ENCODE measurements at regions of chr1 and their contacts with region 1.

Region 1: GRCh38 chr1:65209005-65209885 is 61.2 kb downstream of the AK4 start:
- ATAC-seq: peak in 4 of 8 experiments; percentile 36 to 79 (median 64)
- H3K4me3 ChIP-seq: no peak overlapping the region
- H3K27ac ChIP-seq: no peak overlapping the region
- H3K4me1 ChIP-seq: no peaks in the 10 kb centered on the region

Region 2: DNA sequence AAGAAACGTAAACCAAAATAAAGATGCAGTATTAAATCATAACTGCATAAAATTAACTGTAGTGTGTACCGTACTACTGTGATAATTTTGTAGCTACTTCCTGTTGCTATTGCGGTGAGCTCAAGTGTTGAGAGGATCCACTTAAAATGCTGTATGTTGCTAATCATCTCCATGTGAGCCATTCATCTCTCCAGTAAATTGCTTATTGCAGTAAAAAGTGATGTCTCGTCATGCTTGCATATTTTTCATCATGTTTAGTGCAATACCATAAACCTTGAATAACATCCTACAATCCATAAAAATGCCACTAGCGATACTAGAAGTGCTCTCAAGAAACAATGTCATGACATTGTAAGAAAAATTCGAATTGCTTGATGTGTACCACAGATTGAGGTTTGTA is 398.1 kb before region 1 on chr1:
- in situ Hi-C with region 1: no loop called
- ATAC-seq: peak in 2 of 8 experiments; percentile 8 to 45
- H3K4me3 ChIP-seq: no peak overlapping the region
- H3K27ac ChIP-seq: no peak overlapping the region
- H3K4me1 ChIP-seq: no peaks in the 10 kb centered on the region

Region 3: DNA sequence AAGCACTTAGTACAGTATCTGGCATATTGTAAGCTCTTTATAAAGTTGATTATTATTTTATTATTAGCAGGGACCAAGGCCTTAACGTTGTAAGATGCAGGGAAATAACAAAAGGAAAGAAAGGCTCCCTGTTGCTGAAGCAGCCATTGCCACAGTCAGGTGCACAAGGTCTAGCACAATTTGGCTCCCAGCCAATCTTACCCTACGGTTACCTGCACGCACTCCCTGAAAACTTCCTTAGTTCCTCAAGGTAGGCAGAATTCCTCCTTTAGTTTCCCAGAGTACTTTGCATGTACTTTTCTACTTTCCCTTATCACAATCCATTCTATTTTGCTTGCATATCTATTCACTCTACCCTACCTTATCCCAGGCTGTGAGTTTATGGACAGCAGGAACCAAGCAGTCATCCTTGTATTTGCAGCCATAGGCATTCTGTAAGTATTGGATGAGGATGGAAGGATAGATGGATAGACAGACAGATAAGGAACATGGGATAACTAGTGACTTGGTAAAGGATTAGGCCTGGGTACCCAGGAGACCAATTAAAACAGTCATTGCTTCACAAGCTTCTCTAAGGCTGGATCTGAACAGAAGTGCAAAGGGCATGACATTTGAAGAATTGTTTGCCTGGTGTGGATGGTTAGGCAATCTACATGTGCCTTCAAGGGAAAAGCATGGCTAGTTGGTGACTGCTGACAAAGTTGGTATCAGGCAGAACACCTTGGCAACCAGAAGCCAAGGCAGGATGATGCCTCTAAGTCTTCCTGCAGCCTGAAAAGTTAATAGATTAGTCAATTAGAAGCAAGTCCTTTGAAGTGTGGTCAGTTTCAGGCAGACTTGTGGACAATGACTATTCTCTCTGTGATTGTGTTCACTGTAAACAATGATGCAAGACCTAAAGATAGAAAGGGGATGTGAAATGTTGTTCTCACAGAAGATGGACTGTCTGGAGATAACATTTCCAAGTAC is 222.1 kb before region 1 on chr1:
- in situ Hi-C with region 1: no loop called
- ATAC-seq: peak in 3 of 8 experiments; percentile 27 to 51 (median 35)
- H3K4me3 ChIP-seq: no peak overlapping the region
- H3K27ac ChIP-seq: no peak overlapping the region
- H3K4me1 ChIP-seq: no peaks in the 10 kb centered on the region

Region 4: GRCh38 chr1:65067491-65068201 is 141.6 kb before region 1 on chr1:
- in situ Hi-C with region 1: loop called in 3 of 9 experiments (anchors 25 kb)
- ATAC-seq: peak; percentile 24 to 73 (median 64)
- H3K4me3 ChIP-seq: peak overlapping the region; percentile 76 to 100 (median 93)
- H3K27ac ChIP-seq: peak overlapping the region; percentile 95 to 96
- H3K4me1 ChIP-seq: peaks cover 17 to 19% of the 10 kb centered on the region in 2 donors

Region 5: DNA sequence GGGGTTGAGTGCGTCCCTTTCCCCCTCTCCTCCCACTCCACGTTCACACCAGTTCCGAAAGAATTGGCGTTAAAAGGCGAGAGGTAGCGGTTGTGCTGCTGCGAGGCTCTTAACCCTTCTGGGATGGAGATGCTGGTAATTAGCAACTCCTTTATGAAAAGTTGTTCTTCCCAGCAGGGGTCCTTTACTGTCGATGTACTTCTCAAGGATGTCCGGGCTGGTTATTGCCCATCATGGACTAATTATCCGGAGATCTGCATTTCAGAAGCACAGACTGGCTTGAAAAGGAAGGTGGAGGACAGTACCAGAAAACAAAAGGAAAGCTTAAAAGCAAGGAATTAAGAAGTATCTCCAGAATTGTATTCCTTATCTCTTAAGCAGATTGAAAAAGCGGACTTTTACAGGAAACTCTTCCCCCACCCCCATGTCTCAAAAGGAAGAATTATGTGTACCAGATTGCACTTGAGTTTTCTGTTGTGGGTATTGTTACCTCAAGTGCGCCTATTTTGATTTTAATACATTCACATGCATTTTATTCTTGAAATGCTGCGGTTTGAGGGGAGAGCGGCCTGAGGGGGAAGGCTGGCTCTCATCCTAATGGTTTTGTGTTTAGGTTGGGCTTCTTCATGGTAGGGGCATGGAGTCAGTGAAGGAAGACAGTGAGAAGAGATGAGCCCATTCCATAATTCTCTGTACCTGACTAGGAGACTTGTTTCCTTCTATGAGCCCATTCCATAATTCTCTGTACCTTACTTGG is 59.7 kb before region 1 on chr1:
- in situ Hi-C with region 1: loop called in 1 of 9 experiments (anchors 10 kb)
- ATAC-seq: no peak
- H3K4me3 ChIP-seq: peak overlapping the region; percentile 51 to 87 (median 58)
- H3K27ac ChIP-seq: peak overlapping the region; percentile 26 to 70
- H3K4me1 ChIP-seq: peaks cover 17 to 20% of the 10 kb centered on the region in 2 donors

Region 6: DNA sequence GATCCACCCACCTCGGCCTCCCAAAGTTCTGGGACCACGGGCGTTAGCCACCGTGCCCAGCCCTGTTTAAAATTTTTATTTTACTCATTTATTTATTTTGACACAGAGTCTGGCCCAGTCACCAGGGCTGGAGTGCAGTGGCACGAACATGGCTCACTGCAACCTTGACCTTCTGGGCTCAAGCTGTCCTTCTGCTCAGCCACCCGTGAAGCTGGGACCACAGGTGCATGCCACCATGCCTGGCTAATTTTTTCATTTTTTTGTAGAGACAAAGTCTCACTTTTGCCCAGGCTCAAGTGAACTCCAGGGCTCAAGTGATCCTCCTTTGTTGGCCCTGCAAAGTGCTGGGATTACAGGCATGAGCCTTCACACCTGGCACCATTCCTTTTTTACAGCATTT is 72.6 kb after region 1 on chr1:
- in situ Hi-C with region 1: no loop called
- ATAC-seq: no peak
- H3K4me3 ChIP-seq: no peak overlapping the region
- H3K27ac ChIP-seq: no peak overlapping the region
- H3K4me1 ChIP-seq: peaks cover 12 to 13% of the 10 kb centered on the region in 2 donors